Activated CD8-positive, alpha-beta T cell treated with anti-CD3 and anti-CD28 coated beads, Interleukin-2, amount 10 ng/mL, durations not matched to agents 7 days and 5 days (primary cell): ENCODE measurements at regions of chr1 and their contacts with region 1.

Region 1: GRCh38 chr1:167542109-167543032 is 11.2 kb downstream of the CREG1 start:
- DNase-seq: no peak
- ATAC-seq: peak; percentile 60
- H3K4me3 Mint-ChIP-seq: no peak overlapping the region
- H3K27ac Mint-ChIP-seq: peak overlapping the region; percentile 14
- H3K4me1 Mint-ChIP-seq: peaks cover 51% of the 10 kb centered on the region
- H3K27me3 Mint-ChIP-seq: no peaks in the 10 kb centered on the region

Region 2: GRCh38 chr1:167066333-167067122 is 475.8 kb before region 1 on chr1:
- CTCF ChIA-PET with region 1: interaction called, 15 read pairs
- POLR2A ChIA-PET with region 1: no interaction called
- DNase-seq: peak; percentile 83
- ATAC-seq: peak; percentile 96
- H3K4me3 Mint-ChIP-seq: no peak overlapping the region
- H3K27ac Mint-ChIP-seq: no peak overlapping the region
- H3K4me1 Mint-ChIP-seq: no peaks in the 10 kb centered on the region
- H3K27me3 Mint-ChIP-seq: peaks cover 8% of the 10 kb centered on the region

Region 3: DNA sequence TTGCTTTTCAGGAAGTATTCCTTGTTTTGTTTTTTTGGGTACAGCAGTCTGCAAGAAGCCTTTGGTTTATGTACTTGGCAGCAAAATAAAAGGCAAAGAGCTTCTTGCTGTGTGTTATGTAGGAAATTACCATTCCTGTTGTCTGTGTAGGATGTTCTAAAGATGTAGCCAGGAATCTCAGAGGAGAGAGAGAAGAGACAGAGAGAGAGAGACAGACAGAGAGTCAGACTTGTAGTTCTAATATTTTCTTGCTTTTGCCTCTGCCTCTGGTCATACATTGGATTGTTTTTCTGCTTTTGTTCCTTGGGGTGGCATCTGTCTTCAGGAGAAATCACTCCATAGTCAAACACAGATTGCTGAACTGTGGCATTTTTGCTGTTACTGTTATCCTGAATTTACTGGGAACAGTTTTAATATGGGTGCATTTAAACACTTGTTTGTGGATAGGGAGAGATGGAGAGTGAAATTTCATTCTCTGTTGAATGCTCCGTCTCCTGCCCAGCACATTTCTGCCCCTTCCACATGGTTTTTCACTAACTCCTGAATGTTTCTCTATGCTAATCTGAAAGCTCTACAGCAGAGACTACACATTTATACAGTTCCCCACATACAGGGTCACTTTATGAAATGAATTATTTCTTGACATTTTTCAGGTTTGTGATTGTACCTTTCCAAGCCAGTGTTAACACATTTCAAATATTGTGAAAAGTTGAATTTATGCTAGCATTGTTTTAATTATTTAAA is 271.9 kb before region 1 on chr1:
- CTCF ChIA-PET with region 1: interaction called, 33 read pairs
- POLR2A ChIA-PET with region 1: no interaction called
- DNase-seq: no peak
- ATAC-seq: no peak
- H3K4me3 Mint-ChIP-seq: no peak overlapping the region
- H3K27ac Mint-ChIP-seq: no peak overlapping the region
- H3K4me1 Mint-ChIP-seq: peaks cover 20% of the 10 kb centered on the region
- H3K27me3 Mint-ChIP-seq: no peaks in the 10 kb centered on the region

Region 4: DNA sequence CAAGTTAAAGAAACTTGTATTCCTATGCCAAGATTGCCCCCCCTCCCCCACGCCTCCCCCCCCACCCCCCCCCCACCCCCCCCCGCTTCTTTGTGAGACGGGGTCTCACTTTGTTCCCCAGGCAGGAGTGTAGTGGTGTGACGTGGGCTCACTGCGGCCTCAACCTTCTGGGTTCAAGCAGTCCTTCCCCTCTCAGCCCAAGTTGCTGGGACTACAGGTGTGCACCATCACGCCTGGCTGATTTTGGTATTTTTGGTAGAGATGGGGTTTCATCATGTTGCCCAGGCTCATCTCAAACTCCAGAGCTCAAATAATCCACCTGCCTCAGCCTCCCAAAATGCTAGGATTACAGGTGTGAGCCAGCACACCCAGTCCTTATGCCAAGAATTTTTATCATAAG is 185.1 kb before region 1 on chr1:
- CTCF ChIA-PET with region 1: no interaction called
- POLR2A ChIA-PET with region 1: no interaction called
- DNase-seq: no peak
- ATAC-seq: no peak
- H3K4me3 Mint-ChIP-seq: no peak overlapping the region
- H3K27ac Mint-ChIP-seq: no peak overlapping the region
- H3K4me1 Mint-ChIP-seq: no peaks in the 10 kb centered on the region
- H3K27me3 Mint-ChIP-seq: no peaks in the 10 kb centered on the region

Region 5: GRCh38 chr1:167442124-167442848 is 100.1 kb before region 1 on chr1:
- CTCF ChIA-PET with region 1: interaction called, 26 read pairs
- POLR2A ChIA-PET with region 1: no interaction called
- DNase-seq: peak; percentile 91
- ATAC-seq: peak; percentile 85
- H3K4me3 Mint-ChIP-seq: no peak overlapping the region
- H3K27ac Mint-ChIP-seq: peak overlapping the region; percentile 81
- H3K4me1 Mint-ChIP-seq: peaks cover 94% of the 10 kb centered on the region
- H3K27me3 Mint-ChIP-seq: no peaks in the 10 kb centered on the region

Region 6: GRCh38 chr1:167491586-167492461 is 50.5 kb before region 1 on chr1:
- CTCF ChIA-PET with region 1: interaction called, 12 read pairs
- POLR2A ChIA-PET with region 1: no interaction called
- DNase-seq: peak; percentile 73
- ATAC-seq: peak; percentile 65
- H3K4me3 Mint-ChIP-seq: peak overlapping the region; percentile 77
- H3K27ac Mint-ChIP-seq: peak overlapping the region; percentile 94
- H3K4me1 Mint-ChIP-seq: peaks cover 92% of the 10 kb centered on the region
- H3K27me3 Mint-ChIP-seq: no peaks in the 10 kb centered on the region

Region 7: GRCh38 chr1:167553136-167554027 is 11.0 kb after region 1 on chr1 and contains the start of gene CREG1:
- CTCF ChIA-PET with region 1: interaction called, 76 read pairs
- POLR2A ChIA-PET with region 1: interaction called, 4 read pairs
- DNase-seq: peak; percentile 90
- ATAC-seq: peak; percentile 100
- H3K4me3 Mint-ChIP-seq: peak within 1 kb of the TSS; percentile 84
- H3K27ac Mint-ChIP-seq: peak within 1 kb of the TSS; percentile 47
- H3K4me1 Mint-ChIP-seq: peaks cover 28% of the 10 kb centered on the region
- H3K27me3 Mint-ChIP-seq: peaks cover 9% of the 10 kb centered on the region
- total RNA-seq, gene CREG1: 7.3 to 7.7 TPM

Region 8: GRCh38 chr1:167687919-167688519 is 145.6 kb after region 1 on chr1:
- CTCF ChIA-PET with region 1: interaction called, 10 read pairs
- POLR2A ChIA-PET with region 1: no interaction called
- DNase-seq: peak; percentile 88
- ATAC-seq: peak; percentile 71
- H3K4me3 Mint-ChIP-seq: no peak overlapping the region
- H3K27ac Mint-ChIP-seq: peak overlapping the region; percentile 13
- H3K4me1 Mint-ChIP-seq: peaks cover 10% of the 10 kb centered on the region
- H3K27me3 Mint-ChIP-seq: no peaks in the 10 kb centered on the region

Region 9: DNA sequence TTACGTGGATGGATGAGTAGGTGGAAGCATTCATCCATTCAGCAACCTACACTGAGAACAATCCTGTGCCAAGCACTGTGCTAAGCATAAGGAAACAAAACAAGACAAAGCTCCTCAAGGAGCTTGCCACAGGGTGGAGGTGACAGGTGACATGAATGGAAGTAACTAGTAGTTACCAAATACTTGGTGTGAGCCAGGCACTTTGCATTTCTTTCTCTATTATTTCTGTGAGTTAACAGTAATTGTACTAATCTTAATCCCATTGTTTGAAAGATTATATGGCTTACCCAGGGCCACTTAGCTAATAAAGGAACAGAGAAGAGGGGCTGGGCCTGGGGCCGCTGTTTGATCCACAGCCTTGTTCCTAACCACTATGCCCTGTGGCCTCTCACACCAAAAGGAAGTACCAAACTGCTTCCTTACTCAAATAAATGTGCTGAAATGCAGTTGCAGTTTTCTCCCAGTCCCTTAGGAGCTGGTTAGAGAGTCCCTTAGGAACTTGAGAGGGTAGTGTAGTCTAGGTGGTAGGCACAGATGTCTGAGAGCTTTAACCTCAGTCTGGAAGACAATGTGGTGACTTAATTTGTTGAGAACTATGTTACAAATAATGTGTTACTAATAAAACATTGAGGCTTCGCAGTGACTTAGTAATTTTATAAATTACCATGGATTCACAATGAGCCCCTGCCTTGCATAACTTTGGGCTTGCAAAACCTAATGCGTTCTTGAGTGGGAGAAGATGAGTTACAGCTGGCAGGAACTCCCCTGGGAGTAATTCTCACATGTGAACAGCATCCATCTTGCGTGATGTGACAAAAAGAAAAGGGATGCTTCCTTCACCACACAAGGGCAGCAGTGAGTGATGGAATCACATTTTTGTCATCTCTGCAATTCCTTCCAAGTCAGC is 249.2 kb after region 1 on chr1:
- CTCF ChIA-PET with region 1: no interaction called
- POLR2A ChIA-PET with region 1: no interaction called
- DNase-seq: no peak
- ATAC-seq: no peak
- H3K4me3 Mint-ChIP-seq: no peak overlapping the region
- H3K27ac Mint-ChIP-seq: no peak overlapping the region
- H3K4me1 Mint-ChIP-seq: peaks cover 4% of the 10 kb centered on the region
- H3K27me3 Mint-ChIP-seq: no peaks in the 10 kb centered on the region

Region 10: DNA sequence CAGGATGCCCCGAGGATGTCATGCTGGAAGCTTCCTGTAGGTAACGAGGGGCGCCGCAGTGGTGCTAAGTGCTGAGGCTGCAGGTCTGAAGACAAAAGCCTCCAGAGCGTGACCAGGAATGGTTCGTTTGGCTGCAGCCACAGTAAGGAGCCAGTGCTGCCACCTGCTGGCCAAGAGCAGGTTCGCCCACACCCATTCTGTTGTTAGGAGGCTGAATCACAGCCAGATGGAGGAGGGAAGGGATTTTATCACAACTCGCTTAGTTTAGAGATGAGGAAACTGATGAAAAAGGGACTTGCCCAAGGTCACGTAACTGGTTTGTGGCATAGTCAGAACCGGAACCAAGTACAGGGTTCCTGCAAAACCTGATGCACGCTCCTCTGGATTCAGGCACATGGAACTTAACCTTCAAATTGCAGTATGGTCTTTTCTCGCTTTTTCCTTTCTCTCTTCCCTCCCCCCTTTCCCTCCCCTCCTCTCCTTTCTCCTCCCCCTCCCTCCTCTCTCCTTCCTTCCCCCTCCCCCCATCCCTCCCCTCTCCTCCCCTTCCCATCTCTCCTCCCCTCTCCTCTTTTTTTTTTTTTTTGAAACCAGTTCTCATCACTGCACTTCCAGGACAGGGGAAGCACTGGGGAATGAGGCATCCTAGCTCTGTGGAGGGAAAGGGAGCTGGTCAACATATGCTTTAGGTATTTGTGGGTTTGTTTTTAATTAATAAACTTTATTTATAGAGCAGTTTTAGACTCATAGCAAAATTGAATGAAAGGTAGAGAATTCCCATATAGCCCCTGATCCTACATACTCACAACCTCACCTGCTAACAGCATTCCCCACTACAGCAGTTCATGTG is 261.2 kb after region 1 on chr1:
- CTCF ChIA-PET with region 1: no interaction called
- POLR2A ChIA-PET with region 1: no interaction called
- DNase-seq: peak; percentile 92
- ATAC-seq: peak; percentile 93
- H3K4me3 Mint-ChIP-seq: no peak overlapping the region
- H3K27ac Mint-ChIP-seq: no peak overlapping the region
- H3K4me1 Mint-ChIP-seq: peaks cover 25% of the 10 kb centered on the region
- H3K27me3 Mint-ChIP-seq: peaks cover 2% of the 10 kb centered on the region